ENCODE measurements at regions of chr19 and their contacts with region 1.

Region 1: GRCh38 chr19:2785244-2785997 is at the start of gene THOP1:
- DNase-seq: peak; percentile 99 to 100 (median 99)
- ATAC-seq: peak; percentile 90 to 95 (median 94)
- H3K4me3 ChIP-seq: peak within 1 kb of the TSS; percentile 57 to 99 (median 94)
- H3K27ac ChIP-seq: peak within 1 kb of the TSS in 11 of 12 donors; percentile 17 to 83 (median 69)
- H3K4me1 ChIP-seq: peaks cover 6 to 49% (median 38%) of the 10 kb centered on the region in 12 donors
- H3K27me3 ChIP-seq: no peaks in the 10 kb centered on the region
- CTCF ChIP-seq: no peak
- POLR2A ChIP-seq: peak in 1 of 2 donors; percentile 79
- total RNA-seq, gene THOP1: 36.8 to 78.7 (median 43.9) TPM

Region 2: DNA sequence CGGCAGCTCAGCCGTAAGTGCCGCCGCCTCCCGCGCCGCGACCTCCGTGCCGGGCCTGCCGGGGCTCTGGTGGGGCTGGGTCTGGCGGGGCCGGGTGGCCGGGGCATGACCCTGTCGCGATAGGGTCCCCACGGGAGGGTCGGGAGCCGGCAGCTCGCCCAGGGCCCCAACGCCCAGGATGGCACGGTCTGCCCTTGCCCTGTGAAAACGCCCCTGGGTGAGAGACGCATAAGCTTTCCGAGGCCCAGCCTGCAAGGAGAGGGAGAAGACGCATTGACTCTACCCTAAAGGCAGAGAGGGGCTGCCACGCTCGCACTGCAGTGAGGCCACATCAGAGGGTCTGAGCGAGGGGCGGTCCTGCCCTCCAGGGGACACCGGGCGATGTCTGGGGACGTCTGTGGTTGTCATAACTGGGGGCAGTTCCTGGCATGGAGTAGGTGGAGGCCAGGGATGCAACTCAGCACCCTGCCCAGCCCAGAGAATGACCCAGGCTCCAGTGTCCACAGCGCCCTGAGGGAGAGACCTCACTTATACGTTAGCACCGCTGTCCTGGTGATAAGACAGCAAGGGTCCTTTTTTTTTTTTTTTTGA is 34.8 kb after region 1 on chr19:
- intact Hi-C with region 1: loop called in 2 of 10 experiments (anchors 1 kb)
- DNase-seq: peak in 1 of 5 donors; percentile 37
- ATAC-seq: peak in 2 of 4 donors; percentile 5 to 16
- H3K4me3 ChIP-seq: peak overlapping the region; percentile 59 to 97 (median 84)
- H3K27ac ChIP-seq: peak overlapping the region in 11 of 12 donors; percentile 17 to 84 (median 61)
- H3K4me1 ChIP-seq: peaks cover 0 to 11% (median 5%) of the 10 kb centered on the region in 12 donors
- H3K27me3 ChIP-seq: no peaks in the 10 kb centered on the region
- CTCF ChIP-seq: no peak
- POLR2A ChIP-seq: no peak

Region 3: GRCh38 chr19:2840794-2841790 is 55.7 kb after region 1 on chr19 and contains the start of gene ZNF555:
- intact Hi-C with region 1: loop called in 2 of 10 experiments (anchors 1 to 2 kb)
- DNase-seq: peak; percentile 99 to 100 (median 100)
- ATAC-seq: peak; percentile 98 to 99 (median 98)
- H3K4me3 ChIP-seq: peak within 1 kb of the TSS; percentile 60 to 97 (median 81)
- H3K27ac ChIP-seq: peak within 1 kb of the TSS; percentile 69 to 99 (median 94)
- H3K4me1 ChIP-seq: peaks cover 0 to 28% (median 11%) of the 10 kb centered on the region in 12 donors
- H3K27me3 ChIP-seq: no peaks in the 10 kb centered on the region
- CTCF ChIP-seq: peak; percentile 39 to 70 (median 56)
- POLR2A ChIP-seq: peak in 1 of 2 donors; percentile 62
- total RNA-seq, gene ZNF555: 5.9 to 11.5 (median 8.2) TPM

Region 4: GRCh38 chr19:2887391-2887914 is 102.0 kb after region 1 on chr19:
- intact Hi-C with region 1: no loop called
- DNase-seq: no peak
- ATAC-seq: peak; percentile 57 to 74 (median 73)
- H3K4me3 ChIP-seq: no peak overlapping the region
- H3K27ac ChIP-seq: no peak overlapping the region
- H3K4me1 ChIP-seq: peaks cover 0 to 6% (median 0%) of the 10 kb centered on the region in 12 donors
- H3K27me3 ChIP-seq: no peaks in the 10 kb centered on the region
- CTCF ChIP-seq: peak; percentile 56 to 77 (median 64)
- POLR2A ChIP-seq: no peak

Measured in heart left ventricle (tissue), 16 donors.